HCT116 (cell line): ENCODE measurements at regions of chr7 and their contacts with region 1.

Region 1: GRCh38 chr7:42940985-42941847 is 9.0 kb downstream of the MRPL32 start:
- DNase-seq: peak; percentile 51
- ATAC-seq: peak; percentile 83
- H3K4me3 ChIP-seq: no peak overlapping the region
- H3K27ac ChIP-seq: no peak overlapping the region
- H3K4me1 ChIP-seq: no peaks in the 10 kb centered on the region
- H3K27me3 ChIP-seq: no peaks in the 10 kb centered on the region
- CTCF ChIP-seq: peak; percentile 81 to 94 (median 92)
- POLR2A ChIP-seq: no peak
- RAD21 ChIP-seq: peak; percentile 90

Region 2: GRCh38 chr7:43108255-43109011 is 167.2 kb after region 1 on chr7:
- CTCF ChIA-PET with region 1: no interaction called
- POLR2A ChIA-PET with region 1: no interaction called
- RAD21 ChIA-PET with region 1: no interaction called
- intact Hi-C with region 1: loop called (anchors 1 kb)
- DNase-seq: peak; percentile 44
- ATAC-seq: peak; percentile 99
- H3K4me3 ChIP-seq: no peak overlapping the region
- H3K27ac ChIP-seq: no peak overlapping the region
- H3K4me1 ChIP-seq: no peaks in the 10 kb centered on the region
- H3K27me3 ChIP-seq: no peaks in the 10 kb centered on the region
- CTCF ChIP-seq: peak; percentile 39 to 98 (median 87); a peak in 5 of 6 replicates
- POLR2A ChIP-seq: no peak
- RAD21 ChIP-seq: peak; percentile 62

Region 3: DNA sequence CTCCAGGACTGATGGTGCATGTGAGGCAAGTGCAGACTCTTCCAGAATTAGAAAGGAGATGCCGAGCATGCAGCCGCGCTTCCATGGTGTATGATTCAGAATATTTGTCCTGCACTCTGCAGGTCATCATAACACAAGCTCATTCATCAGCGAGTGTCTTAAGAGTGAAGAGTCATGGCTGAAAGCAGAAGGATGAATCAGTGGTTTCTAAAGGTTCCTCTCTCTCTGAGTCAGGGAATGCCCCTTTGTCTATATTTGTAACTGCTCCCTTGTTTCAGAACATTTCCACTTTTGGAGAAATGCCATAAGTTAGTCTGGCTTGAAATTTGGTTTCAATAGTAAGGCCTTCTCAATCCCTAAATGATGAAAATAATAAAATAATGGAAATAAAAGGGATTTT is 223.5 kb after region 1 on chr7:
- CTCF ChIA-PET with region 1: no interaction called
- POLR2A ChIA-PET with region 1: no interaction called
- RAD21 ChIA-PET with region 1: no interaction called
- intact Hi-C with region 1: no loop called
- DNase-seq: peak; percentile 39
- ATAC-seq: peak; percentile 74
- H3K4me3 ChIP-seq: no peak overlapping the region
- H3K27ac ChIP-seq: no peak overlapping the region
- H3K4me1 ChIP-seq: peaks cover 0 to 14% of the 10 kb centered on the region in 2 experiments; a peak in 2 of 4 replicates
- H3K27me3 ChIP-seq: no peaks in the 10 kb centered on the region
- CTCF ChIP-seq: no peak
- POLR2A ChIP-seq: no peak
- RAD21 ChIP-seq: 0 out of 2 replicates have a peak, but pooled peaks have one; percentile 2

Region 4: GRCh38 chr7:43353902-43354301 is 412.7 kb after region 1 on chr7:
- CTCF ChIA-PET with region 1: no interaction called
- POLR2A ChIA-PET with region 1: no interaction called
- RAD21 ChIA-PET with region 1: no interaction called
- intact Hi-C with region 1: loop called (anchors 5 kb)
- DNase-seq: peak; percentile 6
- ATAC-seq: no peak
- H3K4me3 ChIP-seq: no peak overlapping the region
- H3K27ac ChIP-seq: no peak overlapping the region
- H3K4me1 ChIP-seq: no peaks in the 10 kb centered on the region
- H3K27me3 ChIP-seq: no peaks in the 10 kb centered on the region
- CTCF ChIP-seq: peak; percentile 7 to 47 (median 20); a peak in 3 of 6 replicates
- POLR2A ChIP-seq: no peak
- RAD21 ChIP-seq: peak; percentile 54

Region 5: GRCh38 chr7:43454936-43455518 is 513.8 kb after region 1 on chr7:
- CTCF ChIA-PET with region 1: no interaction called
- POLR2A ChIA-PET with region 1: no interaction called
- RAD21 ChIA-PET with region 1: no interaction called
- intact Hi-C with region 1: loop called (anchors 5 kb)
- DNase-seq: peak; percentile 19
- ATAC-seq: peak; percentile 81
- H3K4me3 ChIP-seq: no peak overlapping the region
- H3K27ac ChIP-seq: no peak overlapping the region
- H3K4me1 ChIP-seq: peaks cover 0 to 5% of the 10 kb centered on the region in 2 experiments; a peak in 2 of 4 replicates
- H3K27me3 ChIP-seq: no peaks in the 10 kb centered on the region
- CTCF ChIP-seq: peak; percentile 49 to 71 (median 68); a peak in 5 of 6 replicates
- POLR2A ChIP-seq: no peak
- RAD21 ChIP-seq: peak; percentile 73

Region 6: GRCh38 chr7:43834463-43835251 is 893.4 kb after region 1 on chr7:
- CTCF ChIA-PET with region 1: no interaction called
- POLR2A ChIA-PET with region 1: no interaction called
- RAD21 ChIA-PET with region 1: no interaction called
- intact Hi-C with region 1: loop called (anchors 1 kb)
- DNase-seq: no peak
- ATAC-seq: no peak
- H3K4me3 ChIP-seq: no peak overlapping the region
- H3K27ac ChIP-seq: no peak overlapping the region
- H3K4me1 ChIP-seq: peaks cover 0 to 24% of the 10 kb centered on the region in 2 experiments; a peak in 2 of 4 replicates
- H3K27me3 ChIP-seq: no peaks in the 10 kb centered on the region
- CTCF ChIP-seq: no peak
- POLR2A ChIP-seq: no peak
- RAD21 ChIP-seq: no peak